Activated T-helper 1 cell treated with anti-CD3 and anti-CD28 coated beads, Interleukin-12 subunit alpha, Interleukin-12 subunit beta, Interleukin-2, Interleukin-4 antibody, amounts not matched to agents 30 ng/mL and 10 ng/mL and 1 ng/mL, durations not matched to agents 14 hours and 24 hours and 36 hours (primary cell): ENCODE measurements at regions of chr6 and their contacts with region 1.

Region 1: DNA sequence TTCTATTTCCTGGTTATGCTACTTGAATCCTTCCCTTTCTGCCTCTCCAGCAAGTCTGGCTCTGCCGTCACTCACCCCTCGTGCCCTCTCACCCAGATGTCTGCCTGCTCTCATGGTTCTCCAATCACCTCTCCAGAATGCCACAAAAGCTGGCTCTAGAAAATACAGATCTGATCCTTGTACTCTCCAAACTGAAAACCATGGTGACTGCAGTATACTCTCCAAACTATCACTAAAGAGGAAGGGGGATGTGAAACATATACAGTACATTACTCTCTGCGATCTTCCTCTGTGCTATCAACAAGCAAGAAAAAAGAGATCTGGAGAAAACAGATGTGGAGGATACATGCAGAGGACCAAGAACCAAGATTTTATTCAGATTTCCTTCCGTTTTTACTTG is 91.1 kb downstream of the ATXN1 start:
- DNase-seq: no peak
- H3K4me3 Mint-ChIP-seq: peak overlapping the region; percentile 51
- H3K27ac Mint-ChIP-seq: peak overlapping the region; percentile 94
- H3K4me1 Mint-ChIP-seq: peaks cover 84% of the 10 kb centered on the region
- H3K27me3 Mint-ChIP-seq: no peaks in the 10 kb centered on the region

Region 2: GRCh38 chr6:16471222-16471909 is 198.8 kb before region 1 on chr6:
- intact Hi-C with region 1: no loop called
- DNase-seq: no peak
- H3K4me3 Mint-ChIP-seq: peak overlapping the region; percentile 56
- H3K27ac Mint-ChIP-seq: peak overlapping the region; percentile 88
- H3K4me1 Mint-ChIP-seq: peaks cover 78% of the 10 kb centered on the region
- H3K27me3 Mint-ChIP-seq: no peaks in the 10 kb centered on the region

Region 3: GRCh38 chr6:16684896-16685554 is 14.8 kb after region 1 on chr6:
- intact Hi-C with region 1: loop called (anchors 1 kb)
- DNase-seq: peak; percentile 71
- H3K4me3 Mint-ChIP-seq: peak overlapping the region; percentile 43
- H3K27ac Mint-ChIP-seq: peak overlapping the region; percentile 88
- H3K4me1 Mint-ChIP-seq: peaks cover 97% of the 10 kb centered on the region
- H3K27me3 Mint-ChIP-seq: no peaks in the 10 kb centered on the region

Region 4: GRCh38 chr6:16731478-16732051 is 61.4 kb after region 1 on chr6:
- intact Hi-C with region 1: no loop called
- DNase-seq: peak; percentile 36
- H3K4me3 Mint-ChIP-seq: peak overlapping the region; percentile 51
- H3K27ac Mint-ChIP-seq: peak overlapping the region; percentile 89
- H3K4me1 Mint-ChIP-seq: peaks cover 71% of the 10 kb centered on the region
- H3K27me3 Mint-ChIP-seq: no peaks in the 10 kb centered on the region